ENCODE measurements at regions of chr14 and their contacts with region 1.

Region 1: GRCh38 chr14:103994535-103995182 is 52.3 kb upstream of the RD3L start:
- DNase-seq: peak; percentile 20
- H3K4me3 Mint-ChIP-seq: no peak overlapping the region
- H3K27ac Mint-ChIP-seq: no peak overlapping the region
- H3K4me1 Mint-ChIP-seq: no peaks in the 10 kb centered on the region
- H3K27me3 Mint-ChIP-seq: no peaks in the 10 kb centered on the region
- CTCF ChIP-seq: no peak

Region 2: GRCh38 chr14:103775506-103775905 is 219.2 kb before region 1 on chr14:
- CTCF ChIA-PET with region 1: no interaction called
- POLR2A ChIA-PET with region 1: no interaction called
- intact Hi-C with region 1: no loop called
- DNase-seq: no peak
- H3K4me3 Mint-ChIP-seq: no peak overlapping the region
- H3K27ac Mint-ChIP-seq: no peak overlapping the region
- H3K4me1 Mint-ChIP-seq: no peaks in the 10 kb centered on the region
- H3K27me3 Mint-ChIP-seq: no peaks in the 10 kb centered on the region
- CTCF ChIP-seq: no peak

Region 3: DNA sequence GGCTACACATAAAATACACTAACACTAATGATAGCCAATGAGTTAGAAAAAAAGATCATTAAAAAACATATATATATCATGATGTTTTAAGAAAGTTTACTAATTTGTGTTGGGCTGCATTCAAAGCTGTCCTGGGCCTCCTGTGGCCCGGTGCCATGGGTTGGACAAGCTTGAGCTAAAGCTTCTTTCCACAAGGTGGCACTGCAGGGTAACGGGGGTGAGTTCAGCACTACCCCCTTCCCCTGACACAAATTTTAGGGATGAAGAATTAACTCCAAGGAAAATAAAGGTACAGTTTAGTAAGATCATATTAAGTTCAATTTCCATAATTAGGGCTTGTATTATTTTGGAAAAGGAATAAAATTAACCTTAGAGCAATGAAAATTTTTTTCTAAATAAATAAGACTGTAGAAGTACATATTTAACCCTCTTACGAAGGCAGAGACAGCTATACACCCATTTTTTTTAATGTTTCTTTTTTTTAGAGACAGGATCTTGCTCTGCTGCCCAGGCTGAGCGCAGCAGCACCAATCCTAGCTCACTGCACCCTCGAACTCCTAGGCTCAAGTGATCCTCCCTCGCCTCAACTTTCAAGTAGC is 186.2 kb before region 1 on chr14:
- CTCF ChIA-PET with region 1: no interaction called
- POLR2A ChIA-PET with region 1: no interaction called
- intact Hi-C with region 1: no loop called
- DNase-seq: peak; percentile 88
- H3K4me3 Mint-ChIP-seq: no peak overlapping the region
- H3K27ac Mint-ChIP-seq: no peak overlapping the region
- H3K4me1 Mint-ChIP-seq: peaks cover 14% of the 10 kb centered on the region
- H3K27me3 Mint-ChIP-seq: no peaks in the 10 kb centered on the region
- CTCF ChIP-seq: peak; percentile 83

Region 4: GRCh38 chr14:103984196-103984595 is 10.5 kb before region 1 on chr14:
- CTCF ChIA-PET with region 1: interaction called, 13 read pairs
- POLR2A ChIA-PET with region 1: interaction called, 3 read pairs
- intact Hi-C with region 1: no loop called
- DNase-seq: no peak
- H3K4me3 Mint-ChIP-seq: no peak overlapping the region
- H3K27ac Mint-ChIP-seq: no peak overlapping the region
- H3K4me1 Mint-ChIP-seq: no peaks in the 10 kb centered on the region
- H3K27me3 Mint-ChIP-seq: peaks cover 14% of the 10 kb centered on the region
- CTCF ChIP-seq: no peak

Region 5: DNA sequence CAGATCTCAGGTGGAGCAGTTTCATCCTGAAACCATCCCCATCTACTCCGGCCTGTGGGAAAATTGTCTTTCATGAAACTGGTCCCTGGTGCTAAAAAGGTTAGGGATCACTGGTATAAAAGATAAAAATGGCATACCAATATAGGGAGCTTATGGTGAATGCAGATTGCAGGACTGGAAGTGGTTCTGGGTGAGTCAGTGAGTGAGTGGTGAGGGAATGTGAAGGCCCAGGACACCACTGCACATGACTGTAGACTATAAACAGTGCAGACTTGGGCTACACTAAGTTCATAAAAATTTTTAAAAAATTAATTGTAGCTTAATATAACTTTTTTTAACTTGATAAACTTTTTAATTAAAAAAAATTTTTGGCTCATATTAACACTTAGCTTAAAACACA is 14.6 kb after region 1 on chr14:
- CTCF ChIA-PET with region 1: no interaction called
- POLR2A ChIA-PET with region 1: no interaction called
- intact Hi-C with region 1: no loop called
- DNase-seq: no peak
- H3K4me3 Mint-ChIP-seq: no peak overlapping the region
- H3K27ac Mint-ChIP-seq: no peak overlapping the region
- H3K4me1 Mint-ChIP-seq: peaks cover 11% of the 10 kb centered on the region
- H3K27me3 Mint-ChIP-seq: no peaks in the 10 kb centered on the region
- CTCF ChIP-seq: no peak

Measured in MCF 10A (cell line).